Left cardiac atrium (tissue), 4 donors: ENCODE measurements at regions of chr15 and their contacts with region 1.

Region 1: GRCh38 chr15:37995461-37996347 is 61.3 kb downstream of the TMCO5A start:
- DNase-seq: peak; percentile 36
- ATAC-seq: peak; percentile 78 to 96

Region 2: GRCh38 chr15:38389924-38390542 is 394.3 kb after region 1 on chr15:
- intact Hi-C with region 1: loop called in 1 of 2 experiments (anchors 10 kb)
- DNase-seq: peak; percentile 63
- ATAC-seq: peak in 1 of 2 donors; percentile 61